ENCODE measurements at regions of chr5 and their contacts with region 1.

Region 1: DNA sequence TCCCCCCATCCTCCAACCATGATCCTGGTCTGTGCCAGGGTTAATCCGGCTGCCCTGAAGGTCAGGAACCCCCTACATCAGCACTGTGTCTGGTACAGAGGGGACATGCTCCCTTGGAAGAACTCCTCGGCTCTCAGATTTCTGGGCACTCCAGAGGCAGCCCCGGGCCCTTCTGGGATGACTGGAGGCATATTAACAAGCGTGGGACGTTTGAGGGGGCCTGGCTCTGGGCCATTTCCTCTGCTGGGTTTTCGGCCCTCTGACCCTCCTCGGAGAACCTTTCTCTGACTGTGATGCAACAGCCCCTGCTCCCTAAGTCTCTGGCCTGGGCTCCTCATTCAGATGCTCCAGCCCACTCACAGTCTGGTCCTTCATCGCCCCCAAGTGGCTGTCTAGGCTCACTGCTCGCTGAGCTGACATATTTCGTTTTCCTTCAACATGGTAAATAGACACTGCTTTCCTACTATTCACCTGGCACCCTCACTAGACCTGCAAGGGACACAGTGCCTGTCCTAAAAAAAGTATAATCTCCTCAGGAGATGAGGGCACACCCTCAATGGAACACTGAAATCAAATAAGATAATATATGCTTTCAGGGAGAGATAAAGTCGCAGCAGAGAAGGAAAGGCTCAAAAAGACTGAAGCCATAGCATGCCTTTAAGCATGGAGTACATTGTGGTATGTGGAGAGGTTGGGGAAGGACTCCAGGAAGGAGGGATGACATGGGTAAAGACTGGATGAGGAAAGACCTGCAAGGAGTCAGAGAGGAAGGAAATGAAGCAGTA is 404.7 kb upstream of the TRPC7 start:
- H3K4me3 ChIP-seq: no peak overlapping the region
- H3K27ac ChIP-seq: no peak overlapping the region; the same call in 1 of the 2 replicates
- H3K4me1 ChIP-seq: 0 out of 2 replicates have a peak, but pooled peaks cover 2% of the 10 kb centered on the region
- CTCF ChIP-seq: peak; percentile 86

Region 2: GRCh38 chr5:136364307-136364706 is 405.8 kb before region 1 on chr5:
- CTCF ChIA-PET with region 1: interaction called, 33 read pairs
- POLR2A ChIA-PET with region 1: no interaction called
- H3K4me3 ChIP-seq: no peak overlapping the region
- H3K27ac ChIP-seq: no peak overlapping the region
- H3K4me1 ChIP-seq: no peaks in the 10 kb centered on the region
- CTCF ChIP-seq: no peak

Region 3: GRCh38 chr5:136374003-136374402 is 396.1 kb before region 1 on chr5:
- CTCF ChIA-PET with region 1: interaction called, 16 read pairs
- POLR2A ChIA-PET with region 1: no interaction called
- H3K4me3 ChIP-seq: no peak overlapping the region
- H3K27ac ChIP-seq: no peak overlapping the region
- H3K4me1 ChIP-seq: 0 out of 2 replicates have a peak, but pooled peaks cover 3% of the 10 kb centered on the region
- CTCF ChIP-seq: 0 out of 2 replicates have a peak, but pooled peaks have one; percentile 15

Region 4: DNA sequence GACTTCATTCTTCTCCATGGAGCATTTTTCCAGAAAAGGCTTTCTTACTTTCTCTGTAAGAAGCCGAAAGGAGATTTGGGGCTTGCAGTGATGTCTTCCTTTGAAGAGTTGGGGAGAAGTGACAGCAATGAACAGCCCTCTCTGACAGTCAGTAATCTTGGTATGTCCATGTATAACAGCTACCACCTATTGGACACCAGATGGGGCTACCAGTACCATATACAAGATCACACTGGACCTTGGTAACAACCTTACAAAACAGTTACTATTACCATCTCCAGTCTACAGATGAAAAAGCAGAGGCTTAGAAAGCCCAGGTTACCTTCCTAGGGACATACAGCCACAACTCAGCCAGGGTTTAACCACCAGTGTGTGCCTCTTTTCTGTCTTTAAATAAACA is 132.0 kb before region 1 on chr5:
- CTCF ChIA-PET with region 1: interaction called, 11 read pairs
- POLR2A ChIA-PET with region 1: no interaction called
- H3K4me3 ChIP-seq: no peak overlapping the region
- H3K27ac ChIP-seq: no peak overlapping the region
- H3K4me1 ChIP-seq: no peaks in the 10 kb centered on the region
- CTCF ChIP-seq: no peak

Region 5: DNA sequence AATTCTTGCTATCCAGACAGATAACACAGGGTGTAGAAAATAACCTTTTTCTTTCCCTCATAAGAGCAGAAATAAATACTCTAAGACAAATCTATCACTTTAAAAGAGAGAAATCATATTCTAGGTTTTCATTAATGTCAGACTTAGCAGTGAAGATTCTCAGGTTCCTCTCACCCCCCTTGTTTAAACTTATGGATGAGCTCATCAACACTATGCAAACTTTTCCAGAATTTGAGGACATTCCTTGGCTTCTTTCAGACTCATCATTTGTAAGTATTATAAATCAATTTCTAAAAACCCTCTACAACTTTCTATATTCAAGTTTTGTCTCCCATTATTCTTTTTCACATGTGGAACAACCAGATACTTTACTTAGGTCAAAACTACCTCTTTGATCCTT is 29.9 kb before region 1 on chr5:
- CTCF ChIA-PET with region 1: no interaction called
- POLR2A ChIA-PET with region 1: no interaction called
- H3K4me3 ChIP-seq: no peak overlapping the region
- H3K27ac ChIP-seq: no peak overlapping the region
- H3K4me1 ChIP-seq: no peaks in the 10 kb centered on the region
- CTCF ChIP-seq: no peak

Region 6: DNA sequence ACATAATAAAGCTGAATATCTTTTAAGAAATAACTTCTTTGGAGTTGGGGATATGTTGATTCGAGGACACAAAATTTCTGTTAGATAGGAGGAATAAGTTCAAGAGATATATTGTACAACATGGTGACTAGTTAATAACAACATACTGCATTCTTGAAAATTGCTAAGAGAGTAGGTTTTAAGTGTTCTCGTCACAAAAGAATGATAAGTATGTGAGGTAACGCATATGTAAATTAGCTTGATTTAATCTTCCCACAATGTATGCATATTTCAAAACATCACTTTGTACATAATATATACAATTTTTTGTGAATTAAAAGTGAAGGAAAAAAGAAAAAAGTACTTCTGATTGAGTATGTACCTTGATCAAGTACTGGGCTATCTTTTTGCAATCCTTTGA is 23.2 kb after region 1 on chr5:
- CTCF ChIA-PET with region 1: no interaction called
- POLR2A ChIA-PET with region 1: no interaction called
- H3K4me3 ChIP-seq: no peak overlapping the region
- H3K27ac ChIP-seq: no peak overlapping the region
- H3K4me1 ChIP-seq: no peaks in the 10 kb centered on the region
- CTCF ChIP-seq: no peak

Measured in HEK293 (cell line).